ENCODE measurements at regions of chr14 and their contacts with region 1.

Region 1: GRCh38 chr14:21917699-21918436 is 244.2 kb upstream of the OR4E1 start:
- DNase-seq: peak; percentile 81
- ATAC-seq: peak; percentile 58
- H3K4me3 Mint-ChIP-seq: peak overlapping the region; percentile 79
- H3K27ac Mint-ChIP-seq: peak overlapping the region; percentile 85
- H3K4me1 Mint-ChIP-seq: peaks cover 52% of the 10 kb centered on the region
- H3K27me3 Mint-ChIP-seq: no peaks in the 10 kb centered on the region
- CTCF ChIP-seq: peak; percentile 58

Region 2: GRCh38 chr14:21902650-21903103 is 15.2 kb before region 1 on chr14:
- CTCF ChIA-PET with region 1: interaction called, 34 read pairs
- POLR2A ChIA-PET with region 1: no interaction called
- intact Hi-C with region 1: no loop called
- DNase-seq: peak; percentile 77
- ATAC-seq: peak; percentile 96
- H3K4me3 Mint-ChIP-seq: peak overlapping the region; percentile 70
- H3K27ac Mint-ChIP-seq: peak overlapping the region; percentile 52
- H3K4me1 Mint-ChIP-seq: peaks cover 12% of the 10 kb centered on the region
- H3K27me3 Mint-ChIP-seq: no peaks in the 10 kb centered on the region
- CTCF ChIP-seq: peak; percentile 67

Region 3: DNA sequence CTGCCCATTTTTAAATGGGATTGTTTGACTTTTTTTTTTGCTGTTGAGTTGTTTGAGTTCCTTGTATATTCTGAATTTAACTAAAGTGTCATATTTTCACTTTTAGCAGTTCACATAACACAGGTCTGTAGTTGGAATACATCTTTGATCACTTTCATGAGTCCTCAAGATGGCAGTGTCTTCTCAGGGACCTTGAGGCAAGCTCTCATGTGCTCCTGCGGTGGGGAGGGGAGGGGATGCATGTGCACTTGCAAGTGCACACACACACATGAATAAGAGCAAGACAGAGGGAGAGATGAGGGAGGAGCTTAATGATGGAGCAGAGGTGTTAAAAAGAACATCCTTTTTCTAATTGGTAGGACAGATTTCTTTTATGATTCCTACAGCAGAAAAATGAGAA is 47.2 kb after region 1 on chr14:
- CTCF ChIA-PET with region 1: interaction called, 11 read pairs
- POLR2A ChIA-PET with region 1: interaction called, 3 read pairs
- intact Hi-C with region 1: no loop called
- DNase-seq: peak; percentile 72
- ATAC-seq: peak; percentile 96
- H3K4me3 Mint-ChIP-seq: peak overlapping the region; percentile 59
- H3K27ac Mint-ChIP-seq: peak overlapping the region; percentile 72
- H3K4me1 Mint-ChIP-seq: peaks cover 14% of the 10 kb centered on the region
- H3K27me3 Mint-ChIP-seq: no peaks in the 10 kb centered on the region
- CTCF ChIP-seq: no peak

Region 4: DNA sequence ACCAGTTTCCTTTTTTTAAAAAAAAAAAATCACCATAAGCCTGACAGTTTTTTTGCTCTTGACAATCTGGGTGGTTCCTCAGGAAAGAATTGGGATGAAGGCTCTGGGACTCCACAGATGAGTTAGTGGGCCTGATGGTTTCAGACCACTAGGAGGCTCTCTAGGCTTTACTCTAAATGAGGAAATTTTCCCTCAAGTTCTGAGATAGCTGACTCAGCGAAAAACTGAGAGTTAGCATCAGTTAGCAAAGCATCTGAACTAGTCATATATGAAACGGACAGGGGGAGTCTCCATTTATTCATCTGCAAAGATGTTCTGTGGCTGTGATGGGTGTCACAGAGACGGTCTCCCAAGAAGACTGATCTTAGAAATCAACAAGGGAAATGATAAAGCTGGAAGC is 70.1 kb after region 1 on chr14:
- CTCF ChIA-PET with region 1: interaction called, 33 read pairs
- POLR2A ChIA-PET with region 1: interaction called, 3 read pairs
- intact Hi-C with region 1: no loop called
- DNase-seq: peak; percentile 38
- ATAC-seq: peak; percentile 74
- H3K4me3 Mint-ChIP-seq: peak overlapping the region; percentile 54
- H3K27ac Mint-ChIP-seq: peak overlapping the region; percentile 89
- H3K4me1 Mint-ChIP-seq: peaks cover 27% of the 10 kb centered on the region
- H3K27me3 Mint-ChIP-seq: peaks cover 1% of the 10 kb centered on the region
- CTCF ChIP-seq: peak; percentile 50

Region 5: DNA sequence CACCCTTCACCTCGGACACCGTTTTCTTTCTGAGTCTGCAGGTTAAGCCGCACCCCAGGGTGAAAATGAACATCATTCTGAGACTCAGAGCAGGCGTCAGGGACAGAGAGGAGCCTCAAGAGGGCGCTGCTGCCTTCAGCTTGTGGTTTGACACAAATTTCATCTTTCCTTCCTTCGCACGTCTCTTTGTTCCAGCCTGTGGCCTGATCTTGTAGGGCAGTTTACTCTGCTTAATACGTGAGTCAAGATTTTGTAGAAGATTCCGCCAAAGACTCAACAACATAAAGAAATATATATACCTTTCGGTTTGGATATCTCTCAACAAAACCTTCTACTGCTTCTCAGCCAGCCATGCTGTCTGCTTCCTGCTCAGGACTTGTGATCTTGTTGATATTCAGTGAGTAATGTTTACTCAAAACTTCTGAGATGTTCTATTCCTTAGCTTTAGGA is 85.0 kb after region 1 on chr14:
- CTCF ChIA-PET with region 1: interaction called, 33 read pairs
- POLR2A ChIA-PET with region 1: no interaction called
- intact Hi-C with region 1: no loop called
- DNase-seq: peak; percentile 86
- ATAC-seq: peak; percentile 79
- H3K4me3 Mint-ChIP-seq: peak overlapping the region; percentile 81
- H3K27ac Mint-ChIP-seq: peak overlapping the region; percentile 92
- H3K4me1 Mint-ChIP-seq: peaks cover 17% of the 10 kb centered on the region
- H3K27me3 Mint-ChIP-seq: no peaks in the 10 kb centered on the region
- CTCF ChIP-seq: peak; percentile 58

Region 6: DNA sequence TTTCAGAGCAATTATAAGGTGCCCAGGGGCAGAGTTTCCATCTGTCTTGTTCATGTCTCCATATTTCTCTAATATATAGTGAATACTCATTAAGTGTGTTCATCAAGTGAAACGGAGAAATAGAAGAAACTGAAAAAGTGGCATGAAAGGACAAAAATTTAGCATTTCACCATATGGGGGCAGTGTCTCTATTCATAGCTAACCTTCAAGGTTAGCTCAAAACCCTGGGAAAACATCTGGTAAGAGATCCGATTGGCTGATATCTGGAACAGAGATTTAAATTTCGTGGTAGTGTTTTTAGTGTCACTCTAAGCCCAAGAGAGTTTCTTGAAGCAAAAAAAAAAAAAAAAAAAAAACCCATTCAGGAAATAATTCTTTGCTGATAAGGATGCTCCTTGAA is 303.6 kb after region 1 on chr14:
- CTCF ChIA-PET with region 1: no interaction called
- POLR2A ChIA-PET with region 1: no interaction called
- intact Hi-C with region 1: no loop called
- DNase-seq: no peak
- ATAC-seq: peak; percentile 39
- H3K4me3 Mint-ChIP-seq: peak overlapping the region; percentile 42
- H3K27ac Mint-ChIP-seq: peak overlapping the region; percentile 69
- H3K4me1 Mint-ChIP-seq: peaks cover 12% of the 10 kb centered on the region
- H3K27me3 Mint-ChIP-seq: no peaks in the 10 kb centered on the region
- CTCF ChIP-seq: no peak

Measured in activated CD8-positive, alpha-beta T cell treated with anti-CD3 and anti-CD28 coated beads for 36 hours (primary cell).